GM10248 (cell line): ENCODE measurements at regions of chr19 and their contacts with region 1.

Region 1: GRCh38 chr19:47210689-47211316 is 20.2 kb downstream of the BBC3 start:
- DNase-seq: peak; percentile 78
- CTCF ChIP-seq: peak; percentile 80

Region 2: DNA sequence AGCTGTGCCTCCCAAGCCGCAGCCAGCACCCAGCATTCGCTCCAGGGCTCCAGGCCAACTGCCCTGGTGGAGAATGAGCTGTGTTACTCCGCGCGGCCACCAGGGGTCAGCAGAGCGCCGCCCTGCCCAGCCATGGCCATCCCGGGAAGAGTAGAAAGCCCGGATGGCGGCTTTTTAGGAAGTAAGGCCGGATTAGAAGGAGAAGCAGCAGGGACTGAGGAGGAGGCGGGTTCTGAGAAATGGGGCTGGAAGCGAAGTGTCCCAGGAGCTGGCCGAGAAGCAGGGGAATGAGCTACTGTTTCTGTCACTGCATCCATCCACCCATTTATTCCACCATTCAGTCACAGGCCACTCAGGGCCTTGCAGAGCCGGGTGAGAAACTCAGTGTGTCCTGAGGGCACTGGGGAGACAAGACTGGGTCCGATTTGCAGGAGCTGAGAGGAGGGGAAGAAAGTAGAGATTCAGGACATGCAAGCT is 197.7 kb before region 1 on chr19:
- CTCF ChIA-PET with region 1: interaction called, 15 read pairs
- POLR2A ChIA-PET with region 1: no interaction called
- DNase-seq: peak; percentile 82
- CTCF ChIP-seq: peak; percentile 98

Region 3: DNA sequence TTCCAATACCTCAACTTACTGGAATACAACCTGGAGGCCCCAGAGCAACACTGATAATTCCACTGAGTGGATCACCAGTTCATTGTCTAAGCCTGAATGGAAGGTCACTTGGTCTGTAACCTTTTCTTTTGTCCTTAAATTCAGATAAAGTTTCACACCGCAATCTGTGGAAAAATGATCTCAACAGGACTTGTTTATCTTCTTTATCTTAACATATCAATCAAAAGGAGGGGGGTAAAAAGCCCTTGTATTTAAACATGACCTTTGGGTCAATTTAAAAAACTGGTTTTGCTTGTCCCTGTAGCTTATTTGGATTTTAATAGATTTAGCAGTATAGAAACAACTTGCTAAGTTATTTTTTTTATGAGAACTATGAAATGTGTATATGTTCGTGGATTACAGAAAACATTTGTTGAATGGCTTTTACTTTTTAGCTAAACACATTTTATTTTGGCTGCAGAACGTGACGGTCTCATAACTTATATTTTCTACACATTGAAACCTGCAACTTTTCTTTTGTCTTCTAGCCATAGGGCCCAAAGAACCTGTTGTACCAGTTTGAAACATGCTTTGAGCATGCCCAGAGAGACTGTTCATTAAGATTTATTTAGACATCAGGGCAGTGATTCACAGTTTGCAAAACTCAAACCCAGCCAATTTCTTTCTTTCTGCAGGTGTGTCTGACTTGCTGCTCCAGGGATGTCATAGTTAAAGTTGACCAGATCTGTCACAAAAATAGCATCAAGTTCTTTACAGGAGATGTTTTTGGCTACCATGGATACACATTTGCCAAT is 58.4 kb before region 1 on chr19:
- CTCF ChIA-PET with region 1: interaction called, 33 read pairs
- POLR2A ChIA-PET with region 1: no interaction called
- DNase-seq: no peak
- CTCF ChIP-seq: no peak

Region 4: DNA sequence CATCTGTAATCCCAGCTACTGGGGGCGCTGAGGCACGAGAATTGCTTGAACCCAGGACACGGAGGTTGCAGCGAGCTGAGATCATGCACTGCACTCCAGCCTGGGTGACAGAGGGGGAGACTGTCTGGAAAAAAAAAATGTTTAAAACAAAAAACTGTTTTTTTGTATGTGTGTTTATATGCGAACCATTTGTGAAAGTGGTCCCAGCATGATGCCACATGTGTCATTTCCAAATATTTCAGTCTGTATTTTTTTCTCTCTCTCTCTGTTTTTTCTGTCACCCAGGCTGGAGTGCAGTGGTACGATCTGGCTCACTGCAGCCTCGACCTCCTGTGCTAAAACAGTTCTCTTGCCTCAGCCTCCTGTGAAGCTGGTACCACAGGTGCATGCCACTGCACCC is 42.7 kb before region 1 on chr19:
- CTCF ChIA-PET with region 1: interaction called, 33 read pairs
- POLR2A ChIA-PET with region 1: no interaction called
- DNase-seq: no peak
- CTCF ChIP-seq: no peak

Region 5: DNA sequence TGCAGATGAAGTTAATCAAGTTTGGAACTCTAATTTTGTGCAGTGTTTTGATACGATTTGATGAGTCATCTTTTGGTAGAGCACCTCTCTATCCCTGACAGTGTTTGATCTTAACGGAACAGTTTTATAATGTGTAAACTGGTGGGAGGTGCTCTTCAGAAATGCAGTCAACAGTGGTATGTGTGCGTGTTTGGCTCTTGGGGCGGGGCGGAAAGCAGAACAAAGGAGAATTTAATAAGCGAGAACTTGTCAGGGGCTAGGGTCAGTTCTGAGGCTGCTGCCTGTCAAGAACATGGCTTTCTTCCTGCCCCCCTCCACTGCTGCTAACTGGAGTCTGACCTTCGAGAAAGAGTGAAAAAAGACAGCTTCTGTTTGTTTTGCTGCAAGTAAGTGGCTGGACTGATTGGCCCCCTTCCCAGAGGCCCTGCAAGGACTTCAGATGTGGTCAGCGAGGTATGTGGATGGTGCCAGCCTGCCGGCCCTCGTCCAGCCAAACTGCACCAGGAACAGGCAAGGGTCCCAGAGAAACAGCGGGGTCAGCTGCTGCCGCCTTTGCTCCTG is 20.6 kb before region 1 on chr19:
- CTCF ChIA-PET with region 1: interaction called, 83 read pairs
- POLR2A ChIA-PET with region 1: no interaction called
- DNase-seq: no peak
- CTCF ChIP-seq: no peak

Region 6: DNA sequence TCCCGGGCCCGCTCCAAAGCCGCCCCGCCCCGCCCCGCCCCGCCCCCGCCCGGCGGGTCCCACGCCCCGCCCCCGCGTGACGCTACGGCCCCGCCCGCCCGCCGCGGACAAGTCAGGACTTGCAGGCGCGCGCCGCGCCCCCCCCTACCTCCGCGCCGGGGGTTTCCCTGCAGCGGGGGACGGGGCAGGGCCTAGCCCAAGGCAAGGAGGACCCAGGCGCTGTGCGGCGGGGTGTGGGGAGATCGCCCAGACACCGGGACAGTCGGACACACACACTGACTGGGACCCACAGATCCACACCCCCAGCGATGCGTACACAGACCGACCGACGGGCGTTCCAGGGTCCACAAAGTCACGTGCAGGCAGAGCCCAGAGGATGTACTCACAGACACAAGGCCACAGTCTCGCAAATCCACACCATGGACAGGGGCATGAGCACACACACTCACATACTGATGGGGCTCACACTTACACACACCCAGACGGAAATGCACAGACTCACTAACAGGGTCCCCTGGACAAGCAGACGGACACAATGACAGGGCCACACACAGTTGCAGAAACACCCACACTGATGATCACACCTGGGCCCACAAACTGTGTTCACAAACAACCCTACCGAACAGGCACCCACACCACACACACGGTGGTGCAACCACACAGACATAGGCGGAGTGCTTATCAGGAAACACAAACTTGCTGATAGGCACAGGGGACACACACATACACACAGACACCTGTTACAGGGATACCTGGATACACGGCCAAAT is 20.6 kb after region 1 on chr19:
- CTCF ChIA-PET with region 1: interaction called, 153 read pairs
- POLR2A ChIA-PET with region 1: interaction called, 61 read pairs
- DNase-seq: peak; percentile 90
- CTCF ChIP-seq: no peak